PC-9 (cell line): ENCODE measurements at regions of chr6 and their contacts with region 1.

Region 1: DNA sequence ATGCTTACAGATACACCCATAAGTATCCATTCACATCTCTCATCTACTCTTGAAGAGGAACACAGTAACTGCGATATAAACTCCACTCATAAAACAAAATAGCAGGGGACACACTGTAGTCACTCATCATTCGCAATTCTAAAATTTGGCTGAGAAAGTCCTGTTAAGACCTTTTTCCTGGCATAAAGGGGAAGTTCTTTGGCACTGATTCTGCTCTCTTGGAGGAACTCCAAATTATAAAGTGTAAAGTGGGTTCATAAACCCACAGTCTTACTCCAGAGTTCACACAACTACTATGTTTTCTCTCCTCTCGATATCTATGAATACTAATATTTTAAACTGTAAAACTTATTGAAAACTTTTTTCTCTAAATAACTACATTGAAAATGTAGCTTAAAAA is 80.6 kb downstream of the ADGB start:
- DNase-seq: no peak
- H3K4me3 ChIP-seq: no peak overlapping the region
- H3K27ac ChIP-seq: no peak overlapping the region
- H3K4me1 ChIP-seq: no peaks in the 10 kb centered on the region
- H3K27me3 ChIP-seq: no peaks in the 10 kb centered on the region
- CTCF ChIP-seq: no peak

Region 2: DNA sequence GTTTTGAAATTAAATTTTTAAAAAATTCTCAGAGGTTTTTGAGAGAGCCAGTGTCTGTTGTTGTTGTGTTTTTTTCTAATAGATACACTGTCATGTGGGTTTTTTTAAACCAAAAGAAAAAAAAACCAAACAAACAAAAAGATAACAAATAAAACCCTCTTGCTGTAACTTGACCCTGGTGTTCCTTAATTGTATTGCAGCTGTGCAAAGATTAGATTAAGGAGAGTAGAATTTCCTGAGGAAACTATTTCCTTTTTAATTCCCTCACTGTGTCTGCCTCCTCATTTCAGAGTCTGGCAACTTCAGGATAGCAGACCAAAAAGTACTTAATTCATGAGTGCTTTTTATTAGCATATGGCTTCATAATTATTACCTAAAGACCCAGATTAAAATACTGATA is 1226.0 kb before region 1 on chr6:
- CTCF ChIA-PET with region 1: interaction called, 11 read pairs
- POLR2A ChIA-PET with region 1: no interaction called
- intact Hi-C with region 1: no loop called
- DNase-seq: no peak
- H3K4me3 ChIP-seq: no peak overlapping the region
- H3K27ac ChIP-seq: no peak overlapping the region
- H3K4me1 ChIP-seq: no peaks in the 10 kb centered on the region
- H3K27me3 ChIP-seq: no peaks in the 10 kb centered on the region
- CTCF ChIP-seq: peak; percentile 66

Region 3: GRCh38 chr6:146543211-146543939 is 136.0 kb before region 1 on chr6 and contains the start of gene RAB32:
- CTCF ChIA-PET with region 1: no interaction called
- POLR2A ChIA-PET with region 1: no interaction called
- intact Hi-C with region 1: no loop called
- DNase-seq: peak; percentile 73 to 90
- H3K4me3 ChIP-seq: peak within 1 kb of the TSS; percentile 96
- H3K27ac ChIP-seq: peak within 1 kb of the TSS; percentile 59
- H3K4me1 ChIP-seq: peaks cover 31% of the 10 kb centered on the region
- H3K27me3 ChIP-seq: no peaks in the 10 kb centered on the region
- CTCF ChIP-seq: peak; percentile 67; the same call in 1 of the 2 replicates
- total RNA-seq, gene RAB32: 21.4 and 22.6 TPM in 2 replicates

Region 4: GRCh38 chr6:146642921-146643320 is 36.5 kb before region 1 on chr6:
- CTCF ChIA-PET with region 1: no interaction called
- POLR2A ChIA-PET with region 1: no interaction called
- intact Hi-C with region 1: no loop called
- DNase-seq: no peak
- H3K4me3 ChIP-seq: no peak overlapping the region
- H3K27ac ChIP-seq: no peak overlapping the region
- H3K4me1 ChIP-seq: no peaks in the 10 kb centered on the region
- H3K27me3 ChIP-seq: no peaks in the 10 kb centered on the region
- CTCF ChIP-seq: no peak